ENCODE measurements at regions of chr6 and their contacts with region 1.

Region 1: DNA sequence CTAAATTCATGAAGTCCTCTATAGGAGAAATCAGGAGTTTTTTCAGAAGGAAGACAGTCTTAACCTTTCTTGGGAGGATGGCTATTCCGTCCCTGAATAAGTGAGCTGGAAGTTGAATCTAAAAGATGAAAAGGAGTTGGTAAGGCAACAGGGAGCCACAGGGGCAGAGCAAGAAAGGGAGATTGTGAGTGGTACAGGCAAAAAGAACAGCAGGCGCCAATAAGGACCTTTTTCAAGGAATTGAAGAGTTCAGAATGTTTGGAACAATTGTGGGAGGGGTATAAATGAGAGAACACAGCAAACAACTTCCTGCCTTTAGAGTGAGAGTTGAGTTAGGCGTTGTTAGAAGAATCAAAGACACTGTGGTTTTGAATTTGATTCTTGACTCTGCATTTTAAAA is 1003.7 kb downstream of the EPHA7 start:
- DNase-seq: no peak
- H3K4me3 ChIP-seq: no peak overlapping the region
- H3K27ac ChIP-seq: no peak overlapping the region
- H3K4me1 ChIP-seq: no peaks in the 10 kb centered on the region
- H3K27me3 ChIP-seq: no peaks in the 10 kb centered on the region
- CTCF ChIP-seq: no peak
- POLR2A ChIP-seq: no peak

Region 2: DNA sequence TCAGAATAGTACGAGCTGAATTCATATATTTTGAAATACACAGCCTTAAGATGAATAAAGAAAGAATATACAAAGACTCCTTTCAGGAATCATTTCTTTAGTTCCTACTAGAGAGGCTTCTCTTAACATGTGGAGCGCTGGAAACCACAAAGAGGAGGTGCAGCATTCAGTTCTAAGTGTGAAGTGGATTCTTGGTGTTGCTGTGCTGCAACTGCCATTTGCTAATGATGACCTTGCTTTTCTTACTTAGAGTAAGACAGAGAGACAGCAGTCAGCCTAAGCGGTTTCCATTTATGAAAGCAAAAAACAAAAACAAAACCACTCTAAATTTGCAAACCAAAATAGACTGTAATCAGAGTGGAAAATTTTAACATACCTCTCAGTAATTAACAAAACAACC is 374.7 kb after region 1 on chr6:
- intact Hi-C with region 1: no loop called
- DNase-seq: no peak
- H3K4me3 ChIP-seq: no peak overlapping the region
- H3K27ac ChIP-seq: no peak overlapping the region
- H3K4me1 ChIP-seq: no peaks in the 10 kb centered on the region
- H3K27me3 ChIP-seq: no peaks in the 10 kb centered on the region
- CTCF ChIP-seq: no peak
- POLR2A ChIP-seq: no peak

Region 3: DNA sequence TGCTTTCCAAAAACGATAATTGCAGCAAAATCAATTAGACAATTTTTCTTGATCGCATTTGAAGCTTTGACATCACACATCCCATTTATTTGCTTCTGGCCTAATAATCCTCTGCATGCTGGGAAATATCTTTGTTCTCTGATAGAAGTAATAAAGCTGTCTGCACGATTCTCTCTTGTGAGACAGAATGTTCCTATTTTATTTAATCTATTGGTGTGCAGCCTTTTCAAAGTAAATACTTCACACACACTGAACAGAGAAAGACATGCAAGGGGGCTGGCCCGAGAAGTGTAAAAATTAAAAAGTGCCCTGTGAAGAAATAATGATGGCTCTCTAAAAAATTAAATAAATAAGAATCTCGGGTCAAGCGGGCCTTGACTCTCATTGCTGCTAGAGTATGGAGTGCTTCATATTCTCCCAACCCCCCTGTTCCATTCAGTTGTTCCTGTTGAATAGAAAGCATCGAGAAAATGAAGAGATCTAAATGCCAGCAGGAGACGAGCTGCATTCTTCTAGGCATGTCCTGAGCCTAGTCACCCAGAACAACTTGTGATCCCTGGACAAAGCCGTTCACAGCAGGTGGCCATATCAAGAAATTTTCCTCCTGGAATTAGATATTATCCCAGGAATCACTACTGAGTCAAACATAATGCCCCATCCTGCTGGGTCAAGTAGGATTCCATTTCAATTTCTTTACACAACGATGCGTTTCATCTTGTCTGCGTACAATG is 1629.6 kb after region 1 on chr6:
- intact Hi-C with region 1: loop called (anchors 5 kb)
- DNase-seq: no peak
- H3K4me3 ChIP-seq: no peak overlapping the region
- H3K27ac ChIP-seq: no peak overlapping the region
- H3K4me1 ChIP-seq: no peaks in the 10 kb centered on the region
- H3K27me3 ChIP-seq: no peaks in the 10 kb centered on the region
- CTCF ChIP-seq: no peak
- POLR2A ChIP-seq: no peak